ENCODE measurements at regions of chr11 and their contacts with region 1.

Region 1: DNA sequence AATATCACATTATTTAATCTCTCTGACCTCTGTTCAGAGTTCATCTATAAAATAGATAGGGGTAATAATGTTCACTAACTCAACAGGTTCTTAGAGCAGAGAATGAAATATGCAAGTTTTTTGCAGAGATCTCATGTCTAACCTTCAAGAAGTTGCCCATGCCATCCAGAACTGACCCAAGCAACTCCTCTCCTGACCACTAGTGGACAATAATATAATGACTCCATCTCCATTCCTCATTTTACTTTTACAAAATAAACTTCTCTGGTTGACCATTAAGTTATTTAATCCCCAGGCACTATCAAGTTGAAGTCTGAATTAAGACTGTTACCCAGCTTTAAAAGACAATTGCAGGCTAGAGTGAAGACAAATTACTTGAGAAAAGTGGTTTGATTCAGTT is 382.6 kb downstream of the KCNA4 start:
- DNase-seq: no peak
- H3K4me3 ChIP-seq: no peak overlapping the region
- H3K27ac ChIP-seq: no peak overlapping the region
- H3K4me1 ChIP-seq: no peaks in the 10 kb centered on the region
- H3K27me3 ChIP-seq: no peaks in the 10 kb centered on the region
- CTCF ChIP-seq: peak in 2 of 3 experiments; percentile 39; a peak in 2 of 4 replicates
- EP300 ChIP-seq: no peak
- POLR2A ChIP-seq: no peak
- RAD21 ChIP-seq: peak; percentile 69 to 73

Region 2: GRCh38 chr11:29051935-29052334 is 582.3 kb before region 1 on chr11:
- CTCF ChIA-PET with region 1: no interaction called
- POLR2A ChIA-PET with region 1: no interaction called
- DNase-seq: no peak
- H3K4me3 ChIP-seq: no peak overlapping the region
- H3K27ac ChIP-seq: no peak overlapping the region
- H3K4me1 ChIP-seq: no peaks in the 10 kb centered on the region
- H3K27me3 ChIP-seq: no peaks in the 10 kb centered on the region
- CTCF ChIP-seq: no peak
- EP300 ChIP-seq: no peak
- POLR2A ChIP-seq: no peak
- RAD21 ChIP-seq: no peak

Region 3: GRCh38 chr11:29448246-29448877 is 185.9 kb before region 1 on chr11:
- CTCF ChIA-PET with region 1: interaction called, 33 read pairs
- POLR2A ChIA-PET with region 1: no interaction called
- DNase-seq: no peak
- H3K4me3 ChIP-seq: no peak overlapping the region
- H3K27ac ChIP-seq: no peak overlapping the region
- H3K4me1 ChIP-seq: no peaks in the 10 kb centered on the region
- H3K27me3 ChIP-seq: no peaks in the 10 kb centered on the region
- CTCF ChIP-seq: peak in 2 of 3 experiments; percentile 54 to 68; a peak in 3 of 4 replicates
- EP300 ChIP-seq: no peak
- POLR2A ChIP-seq: no peak
- RAD21 ChIP-seq: peak; percentile 88 to 92

Region 4: DNA sequence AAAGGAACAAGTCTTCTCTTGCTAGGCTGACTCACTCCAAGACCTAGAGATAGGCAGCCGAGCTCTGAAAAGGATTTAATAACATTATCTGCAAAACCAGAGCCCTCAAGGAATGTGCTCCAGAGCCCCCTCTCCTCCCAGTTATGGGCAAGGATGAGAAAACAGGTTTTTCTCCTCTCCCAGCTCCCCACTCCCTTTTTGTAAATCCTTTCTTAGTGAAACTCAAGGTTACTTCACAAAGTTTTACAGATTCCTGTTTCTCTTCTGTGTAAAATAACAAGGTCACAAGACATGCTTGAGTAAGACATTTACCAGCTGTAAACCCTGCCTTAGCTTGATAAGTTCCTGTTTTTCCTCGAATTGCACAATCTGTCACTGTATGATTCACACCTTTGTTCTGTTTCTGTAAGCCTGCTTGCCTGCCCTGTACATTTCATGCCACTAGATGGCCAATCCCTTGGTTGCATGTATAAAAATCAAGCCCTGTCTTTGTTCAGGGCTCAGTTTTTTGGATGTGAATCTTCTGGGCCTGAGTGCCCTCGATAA is 106.8 kb before region 1 on chr11:
- CTCF ChIA-PET with region 1: interaction called, 10 read pairs
- POLR2A ChIA-PET with region 1: no interaction called
- DNase-seq: no peak
- H3K4me3 ChIP-seq: no peak overlapping the region
- H3K27ac ChIP-seq: no peak overlapping the region
- H3K4me1 ChIP-seq: no peaks in the 10 kb centered on the region
- H3K27me3 ChIP-seq: no peaks in the 10 kb centered on the region
- CTCF ChIP-seq: peak in 2 of 3 experiments; percentile 18 to 47; a peak in 2 of 4 replicates
- EP300 ChIP-seq: no peak
- POLR2A ChIP-seq: no peak
- RAD21 ChIP-seq: peak in 1 of 2 experiments; percentile 34; a peak in 3 of 4 replicates

Region 5: GRCh38 chr11:29645373-29645772 is 11.1 kb after region 1 on chr11:
- CTCF ChIA-PET with region 1: interaction called, 13 read pairs
- POLR2A ChIA-PET with region 1: no interaction called
- DNase-seq: no peak
- H3K4me3 ChIP-seq: no peak overlapping the region
- H3K27ac ChIP-seq: no peak overlapping the region
- H3K4me1 ChIP-seq: no peaks in the 10 kb centered on the region
- H3K27me3 ChIP-seq: no peaks in the 10 kb centered on the region
- CTCF ChIP-seq: no peak
- EP300 ChIP-seq: no peak
- POLR2A ChIP-seq: no peak
- RAD21 ChIP-seq: no peak

Measured in H1 (cell line).